OCI-LY7 (cell line): ENCODE measurements at regions of chr2 and their contacts with region 1.

Region 1: GRCh38 chr2:64586883-64587481 is 62.9 kb downstream of the AFTPH start:
- DNase-seq: peak; percentile 65
- H3K4me3 ChIP-seq: no peak overlapping the region
- H3K27ac ChIP-seq: no peak overlapping the region
- H3K4me1 ChIP-seq: peaks cover 16% of the 10 kb centered on the region
- CTCF ChIP-seq: peak; percentile 93

Region 2: GRCh38 chr2:64562148-64562784 is 24.7 kb before region 1 on chr2:
- CTCF ChIA-PET with region 1: interaction called, 3 read pairs
- POLR2A ChIA-PET with region 1: interaction called, 22 read pairs
- intact Hi-C with region 1: no loop called
- DNase-seq: peak; percentile 59
- H3K4me3 ChIP-seq: no peak overlapping the region
- H3K27ac ChIP-seq: peak overlapping the region; percentile 29
- H3K4me1 ChIP-seq: peaks cover 16% of the 10 kb centered on the region
- CTCF ChIP-seq: peak; percentile 88

Region 3: DNA sequence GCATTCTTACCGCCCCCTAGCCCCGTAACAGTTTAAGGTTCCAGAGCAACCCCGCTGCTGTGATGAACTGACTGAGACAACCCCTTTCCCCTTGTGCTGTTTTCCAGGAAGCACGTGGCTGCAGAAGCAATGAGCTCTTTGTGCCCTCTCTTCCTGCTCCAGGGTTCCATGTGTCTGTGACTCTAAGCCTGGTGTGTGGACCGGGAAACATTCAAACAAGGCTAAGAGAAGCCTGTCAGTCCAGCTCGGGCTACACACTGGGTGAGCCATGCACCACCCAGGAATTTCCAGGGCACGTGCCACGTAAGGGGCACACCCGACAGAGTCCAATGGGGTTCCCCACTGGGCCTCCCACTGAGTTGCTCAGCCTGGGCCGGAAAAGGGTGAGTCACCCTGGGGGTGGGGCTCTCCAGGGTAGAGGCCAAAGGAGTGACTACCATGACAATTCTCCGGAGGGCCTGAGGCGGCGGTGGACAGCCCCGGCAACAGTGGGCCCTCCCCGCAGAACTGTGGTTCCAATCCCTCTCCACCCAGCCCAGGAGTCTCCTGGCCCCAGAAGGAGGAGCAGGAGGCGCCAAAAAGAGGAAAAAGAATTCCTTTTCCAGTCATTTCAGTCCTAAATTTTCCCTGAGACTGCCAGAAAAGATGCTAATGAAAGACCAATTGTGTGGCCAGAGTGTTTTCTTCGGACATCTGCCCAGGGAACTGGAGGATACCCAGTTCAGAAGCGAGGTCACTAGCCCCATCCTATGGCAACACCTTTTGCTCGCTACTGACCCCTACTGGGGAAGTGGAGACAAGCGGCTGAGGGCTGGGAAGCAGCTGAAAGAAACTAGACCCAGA is 244.4 kb after region 1 on chr2:
- CTCF ChIA-PET with region 1: no interaction called
- POLR2A ChIA-PET with region 1: interaction called, 3 read pairs
- intact Hi-C with region 1: loop called (anchors 1 kb)
- DNase-seq: peak; percentile 84
- H3K4me3 ChIP-seq: no peak overlapping the region
- H3K27ac ChIP-seq: no peak overlapping the region
- H3K4me1 ChIP-seq: peaks cover 6% of the 10 kb centered on the region
- CTCF ChIP-seq: peak; percentile 99

Region 4: GRCh38 chr2:64865073-64865830 is 278.3 kb after region 1 on chr2:
- CTCF ChIA-PET with region 1: no interaction called
- POLR2A ChIA-PET with region 1: interaction called, 6 read pairs
- intact Hi-C with region 1: loop called (anchors 2 kb)
- DNase-seq: peak; percentile 76
- H3K4me3 ChIP-seq: peak overlapping the region; percentile 69
- H3K27ac ChIP-seq: peak overlapping the region; percentile 20
- H3K4me1 ChIP-seq: peaks cover 54% of the 10 kb centered on the region
- CTCF ChIP-seq: peak; percentile 75

Region 5: GRCh38 chr2:64873472-64873924 is 286.5 kb after region 1 on chr2:
- CTCF ChIA-PET with region 1: no interaction called
- POLR2A ChIA-PET with region 1: interaction called, 6 read pairs
- intact Hi-C with region 1: loop called (anchors 2 kb)
- DNase-seq: peak; percentile 75
- H3K4me3 ChIP-seq: peak overlapping the region; percentile 28
- H3K27ac ChIP-seq: no peak overlapping the region
- H3K4me1 ChIP-seq: peaks cover 9% of the 10 kb centered on the region
- CTCF ChIP-seq: peak; percentile 98